Activated B cell treated with CpG ODN at 0.5 μM for 24 hours (primary cell): ENCODE measurements at regions of chr1 and their contacts with region 1.

Region 1: DNA sequence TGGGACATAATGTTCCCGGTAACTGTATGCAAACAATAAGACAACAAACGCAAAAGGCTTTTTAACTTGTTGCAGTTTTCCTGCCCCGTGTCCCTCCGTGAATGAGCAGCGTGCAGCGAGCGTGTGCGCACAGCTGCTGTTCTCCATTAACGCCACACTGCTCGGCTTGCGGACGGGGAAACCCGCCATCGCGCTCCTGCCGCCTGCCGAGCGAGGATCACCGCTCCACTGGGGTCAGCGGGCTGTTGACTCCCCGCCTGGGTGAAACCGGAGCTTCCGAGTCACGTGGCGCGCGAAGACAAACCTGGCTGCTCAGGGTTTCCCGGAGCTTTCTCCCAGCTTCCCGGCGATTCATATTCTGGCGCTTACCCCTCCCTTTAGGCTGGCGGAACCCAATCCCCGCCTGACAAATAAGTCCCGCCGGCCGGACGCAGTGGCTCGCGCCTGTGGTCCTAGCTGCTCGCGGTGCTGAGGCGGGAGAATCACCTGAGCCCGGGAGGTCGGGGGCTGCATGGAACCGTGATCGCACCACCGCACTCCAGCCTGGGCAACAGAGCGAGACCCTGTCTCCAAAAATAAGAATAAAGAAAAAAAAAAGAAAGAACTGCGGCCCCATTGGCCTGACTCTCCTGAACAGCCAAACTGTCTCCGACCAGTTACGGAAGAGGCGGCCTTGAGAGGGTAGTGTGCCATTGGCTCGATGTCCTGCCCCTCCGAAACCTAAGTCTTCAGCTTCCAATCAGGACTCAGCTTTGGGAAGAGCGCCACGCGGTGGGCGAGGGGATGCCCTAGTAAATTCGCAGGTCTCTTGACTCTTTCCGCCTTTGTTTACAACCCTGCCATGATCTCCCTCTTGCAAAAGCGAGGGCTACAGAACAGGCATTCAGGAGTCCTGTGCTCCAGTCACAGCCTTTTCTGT is at the start of gene CREB3L4:
- DNase-seq: peak; percentile 72
- ATAC-seq: peak; percentile 85
- H3K4me3 Mint-ChIP-seq: peak within 1 kb of the TSS; percentile 96
- H3K27ac Mint-ChIP-seq: peak within 1 kb of the TSS; percentile 97
- H3K4me1 Mint-ChIP-seq: peaks cover 62% of the 10 kb centered on the region
- H3K27me3 Mint-ChIP-seq: no peaks in the 10 kb centered on the region
- CTCF ChIP-seq: no peak
- total RNA-seq, gene CREB3L4: 9.4 and 10.2 TPM in 2 replicates

Region 2: GRCh38 chr1:153842006-153842471 is 125.3 kb before region 1 on chr1:
- CTCF ChIA-PET with region 1: no interaction called
- POLR2A ChIA-PET with region 1: interaction called, 11 read pairs
- intact Hi-C with region 1: no loop called
- DNase-seq: no peak
- ATAC-seq: peak; percentile 60
- H3K4me3 Mint-ChIP-seq: peak overlapping the region; percentile 3
- H3K27ac Mint-ChIP-seq: peak overlapping the region; percentile 51
- H3K4me1 Mint-ChIP-seq: peaks cover 42% of the 10 kb centered on the region
- H3K27me3 Mint-ChIP-seq: no peaks in the 10 kb centered on the region
- CTCF ChIP-seq: no peak